Activated B cell treated with CpG ODN at 0.5 μM for 24 hours (primary cell): ENCODE measurements at regions of chr16 and their contacts with region 1.

Region 1: DNA sequence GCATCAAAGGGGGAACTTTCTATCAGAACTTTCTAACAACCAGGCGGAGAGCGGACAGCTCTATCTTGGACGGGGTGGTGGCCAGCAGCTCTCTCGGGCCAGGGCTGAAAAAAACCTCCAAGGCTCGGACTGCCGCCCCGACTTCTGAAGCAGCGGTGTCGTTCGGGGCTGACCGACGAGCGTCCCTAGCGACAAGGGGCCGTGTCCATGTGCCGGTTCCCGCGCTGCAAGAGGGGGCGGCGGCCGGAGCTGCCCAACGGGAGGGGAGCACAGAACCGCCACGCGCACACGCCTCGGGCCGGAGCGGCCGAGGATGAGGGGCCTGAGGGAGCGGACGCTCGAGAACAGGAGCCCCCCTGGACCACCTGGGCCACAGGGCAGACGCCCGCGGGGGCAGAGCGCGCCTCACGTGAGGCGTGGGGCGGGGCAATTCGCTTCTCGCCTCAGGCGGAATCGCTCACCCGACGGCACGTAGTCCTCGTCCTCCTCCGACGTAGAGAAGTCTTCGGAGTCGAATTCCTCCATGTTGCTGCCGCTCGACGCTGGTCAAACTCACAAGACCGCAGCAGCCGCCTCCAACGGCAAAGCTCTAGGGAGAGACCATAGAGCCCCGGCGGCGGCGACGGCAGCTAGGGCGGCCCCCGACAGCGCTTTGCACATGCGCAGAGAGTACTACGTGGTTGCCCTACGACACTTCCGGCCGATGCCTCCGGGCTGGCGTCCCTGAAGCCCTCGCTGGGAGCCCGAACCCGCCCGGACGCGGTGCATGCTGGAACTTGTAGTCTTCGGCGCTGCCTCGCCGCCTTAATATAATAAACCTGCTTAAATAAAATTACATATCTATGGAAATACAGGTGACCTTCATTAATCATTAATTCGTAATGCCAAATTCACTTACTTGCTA is at the start of gene CFDP1:
- DNase-seq: peak; percentile 91
- ATAC-seq: peak; percentile 86
- H3K4me3 Mint-ChIP-seq: peak within 1 kb of the TSS; percentile 91
- H3K27ac Mint-ChIP-seq: peak within 1 kb of the TSS; percentile 88
- H3K4me1 Mint-ChIP-seq: peaks cover 19% of the 10 kb centered on the region
- H3K27me3 Mint-ChIP-seq: no peaks in the 10 kb centered on the region
- CTCF ChIP-seq: no peak
- total RNA-seq, gene CFDP1: 27.7 and 32.0 TPM in 2 replicates

Region 2: GRCh38 chr16:74296432-74297144 is 1136.5 kb before region 1 on chr16 and contains the start of gene PSMD7:
- CTCF ChIA-PET with region 1: no interaction called
- POLR2A ChIA-PET with region 1: no interaction called
- intact Hi-C with region 1: loop called (anchors 1 kb)
- DNase-seq: peak; percentile 89
- ATAC-seq: peak; percentile 94
- H3K4me3 Mint-ChIP-seq: peak within 1 kb of the TSS; percentile 87
- H3K27ac Mint-ChIP-seq: peak within 1 kb of the TSS; percentile 90
- H3K4me1 Mint-ChIP-seq: peaks cover 33% of the 10 kb centered on the region
- H3K27me3 Mint-ChIP-seq: no peaks in the 10 kb centered on the region
- CTCF ChIP-seq: no peak
- total RNA-seq, gene PSMD7: 86.1 and 91.8 TPM in 2 replicates

Region 3: GRCh38 chr16:74984535-74985296 is 448.4 kb before region 1 on chr16 and contains the start of gene WDR59:
- CTCF ChIA-PET with region 1: no interaction called
- POLR2A ChIA-PET with region 1: interaction called, 3 read pairs
- intact Hi-C with region 1: loop called (anchors 2 kb)
- DNase-seq: peak; percentile 90
- ATAC-seq: peak; percentile 99
- H3K4me3 Mint-ChIP-seq: peak within 1 kb of the TSS; percentile 96
- H3K27ac Mint-ChIP-seq: peak within 1 kb of the TSS; percentile 88
- H3K4me1 Mint-ChIP-seq: peaks cover 20% of the 10 kb centered on the region
- H3K27me3 Mint-ChIP-seq: no peaks in the 10 kb centered on the region
- CTCF ChIP-seq: no peak
- total RNA-seq, gene WDR59: 80.8 and 93.3 TPM in 2 replicates

Region 4: GRCh38 chr16:75392911-75393310 is 40.2 kb before region 1 on chr16:
- CTCF ChIA-PET with region 1: no interaction called
- POLR2A ChIA-PET with region 1: no interaction called
- intact Hi-C with region 1: no loop called
- DNase-seq: no peak
- ATAC-seq: no peak
- H3K4me3 Mint-ChIP-seq: no peak overlapping the region
- H3K27ac Mint-ChIP-seq: no peak overlapping the region
- H3K4me1 Mint-ChIP-seq: no peaks in the 10 kb centered on the region
- H3K27me3 Mint-ChIP-seq: no peaks in the 10 kb centered on the region
- CTCF ChIP-seq: no peak

Region 5: DNA sequence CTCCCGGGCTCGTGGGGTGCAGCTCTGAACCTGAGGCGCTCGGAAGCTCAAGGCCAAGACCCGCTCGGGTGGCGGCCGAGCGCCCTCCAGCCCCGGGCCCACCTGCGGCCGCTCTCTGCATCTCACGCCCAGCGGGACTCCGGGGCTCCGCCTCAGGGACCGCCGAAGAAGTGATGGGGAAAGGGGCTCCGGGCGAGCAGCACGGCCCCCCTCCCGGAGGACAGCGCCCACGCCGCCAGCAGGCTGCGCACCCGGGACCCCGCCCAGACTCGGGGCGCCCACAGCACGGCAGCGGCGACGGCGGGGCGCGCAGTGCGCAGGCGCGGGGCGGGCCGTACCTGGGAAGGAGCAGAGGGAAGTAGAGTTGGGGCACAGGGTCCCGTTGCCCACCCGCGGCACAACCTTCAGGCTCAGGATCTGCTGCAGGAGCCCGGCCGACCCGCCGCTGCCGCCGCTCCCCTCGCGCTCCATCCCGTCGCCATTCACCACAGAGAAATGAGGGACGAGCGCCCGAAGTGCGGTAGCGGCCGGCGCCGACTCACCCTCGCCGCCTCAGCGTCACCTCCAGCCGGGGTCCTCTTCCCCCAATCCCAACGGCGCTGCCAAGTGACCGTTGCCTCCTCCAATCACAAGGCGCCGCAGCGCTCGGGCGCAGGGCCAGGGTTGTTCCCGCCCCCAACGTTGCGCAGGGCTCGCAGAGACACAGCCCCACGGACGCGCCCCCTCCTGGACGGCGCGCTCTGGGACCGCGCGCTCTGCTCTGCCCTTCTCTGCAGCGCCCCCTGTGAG is 31.2 kb after region 1 on chr16 and contains the start of gene TMEM170A:
- CTCF ChIA-PET with region 1: interaction called, 4 read pairs
- POLR2A ChIA-PET with region 1: interaction called, 14 read pairs
- intact Hi-C with region 1: loop called (anchors 1 kb)
- DNase-seq: peak; percentile 98
- ATAC-seq: peak; percentile 95
- H3K4me3 Mint-ChIP-seq: peak within 1 kb of the TSS; percentile 92
- H3K27ac Mint-ChIP-seq: peak within 1 kb of the TSS; percentile 89
- H3K4me1 Mint-ChIP-seq: peaks cover 41% of the 10 kb centered on the region
- H3K27me3 Mint-ChIP-seq: no peaks in the 10 kb centered on the region
- CTCF ChIP-seq: peak; percentile 99
- total RNA-seq, gene TMEM170A: 25.3 and 28.3 TPM in 2 replicates

Region 6: GRCh38 chr16:75555707-75556430 is 122.8 kb after region 1 on chr16 and contains the start of gene TMEM231:
- CTCF ChIA-PET with region 1: no interaction called
- POLR2A ChIA-PET with region 1: no interaction called
- intact Hi-C with region 1: loop called (anchors 1 kb)
- DNase-seq: peak; percentile 89
- ATAC-seq: peak; percentile 94
- H3K4me3 Mint-ChIP-seq: peak within 1 kb of the TSS; percentile 93
- H3K27ac Mint-ChIP-seq: peak within 1 kb of the TSS; percentile 89
- H3K4me1 Mint-ChIP-seq: peaks cover 10% of the 10 kb centered on the region
- H3K27me3 Mint-ChIP-seq: no peaks in the 10 kb centered on the region
- CTCF ChIP-seq: no peak
- total RNA-seq, gene TMEM231: 4.0 and 4.1 TPM in 2 replicates

Region 7: DNA sequence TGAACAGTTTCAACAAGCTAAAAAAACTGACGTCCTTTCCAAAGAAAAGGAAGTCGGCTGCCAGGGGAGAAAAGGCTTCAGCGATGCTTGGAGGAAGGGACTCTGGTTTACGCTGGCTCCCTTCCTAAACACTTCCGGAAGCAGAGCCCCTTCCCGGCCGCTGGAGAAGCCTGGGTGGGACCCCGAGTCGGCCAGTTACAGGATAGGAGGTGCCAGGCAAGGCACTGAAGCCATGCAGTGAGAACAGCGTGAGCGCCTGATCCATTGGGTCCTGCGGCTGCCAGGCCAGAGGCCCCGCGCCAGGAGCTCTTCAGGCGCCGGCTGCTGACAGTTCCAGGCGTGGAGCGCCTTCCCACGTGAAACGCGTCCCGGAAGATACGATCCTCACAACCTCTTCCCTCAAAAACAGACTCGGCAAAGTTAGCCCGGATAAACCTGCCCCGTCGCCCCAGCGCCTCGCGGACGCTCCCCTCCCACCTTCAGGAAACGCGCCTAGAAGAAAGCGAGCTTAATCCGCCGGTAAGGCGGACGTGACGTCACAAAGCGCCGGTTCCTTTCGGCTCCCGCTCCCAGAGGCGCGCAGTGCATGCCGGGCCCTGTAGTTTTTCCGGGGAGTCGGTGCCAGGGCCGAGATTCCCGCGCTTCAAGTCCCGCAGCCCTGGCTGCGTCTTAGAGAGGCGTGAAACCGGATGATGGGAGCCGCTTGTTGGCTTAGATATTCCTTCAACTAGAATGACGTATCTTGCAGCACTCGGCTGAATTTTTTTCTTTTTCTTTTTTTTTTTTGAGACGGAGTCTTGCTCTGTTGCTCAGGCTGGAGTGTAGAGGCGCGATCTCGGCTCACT is 189.9 kb after region 1 on chr16 and contains the start of gene ADAT1:
- CTCF ChIA-PET with region 1: no interaction called
- POLR2A ChIA-PET with region 1: interaction called, 16 read pairs
- intact Hi-C with region 1: loop called (anchors 1 kb)
- DNase-seq: peak; percentile 93
- ATAC-seq: peak; percentile 97
- H3K4me3 Mint-ChIP-seq: peak within 1 kb of the TSS; percentile 98
- H3K27ac Mint-ChIP-seq: peak within 1 kb of the TSS; percentile 95
- H3K4me1 Mint-ChIP-seq: peaks cover 22% of the 10 kb centered on the region
- H3K27me3 Mint-ChIP-seq: no peaks in the 10 kb centered on the region
- CTCF ChIP-seq: no peak
- total RNA-seq, gene ADAT1: 52.7 and 57.2 TPM in 2 replicates